CD8-positive, alpha-beta memory T cell (primary cell): ENCODE measurements at regions of chr5 and their contacts with region 1.

Region 1: DNA sequence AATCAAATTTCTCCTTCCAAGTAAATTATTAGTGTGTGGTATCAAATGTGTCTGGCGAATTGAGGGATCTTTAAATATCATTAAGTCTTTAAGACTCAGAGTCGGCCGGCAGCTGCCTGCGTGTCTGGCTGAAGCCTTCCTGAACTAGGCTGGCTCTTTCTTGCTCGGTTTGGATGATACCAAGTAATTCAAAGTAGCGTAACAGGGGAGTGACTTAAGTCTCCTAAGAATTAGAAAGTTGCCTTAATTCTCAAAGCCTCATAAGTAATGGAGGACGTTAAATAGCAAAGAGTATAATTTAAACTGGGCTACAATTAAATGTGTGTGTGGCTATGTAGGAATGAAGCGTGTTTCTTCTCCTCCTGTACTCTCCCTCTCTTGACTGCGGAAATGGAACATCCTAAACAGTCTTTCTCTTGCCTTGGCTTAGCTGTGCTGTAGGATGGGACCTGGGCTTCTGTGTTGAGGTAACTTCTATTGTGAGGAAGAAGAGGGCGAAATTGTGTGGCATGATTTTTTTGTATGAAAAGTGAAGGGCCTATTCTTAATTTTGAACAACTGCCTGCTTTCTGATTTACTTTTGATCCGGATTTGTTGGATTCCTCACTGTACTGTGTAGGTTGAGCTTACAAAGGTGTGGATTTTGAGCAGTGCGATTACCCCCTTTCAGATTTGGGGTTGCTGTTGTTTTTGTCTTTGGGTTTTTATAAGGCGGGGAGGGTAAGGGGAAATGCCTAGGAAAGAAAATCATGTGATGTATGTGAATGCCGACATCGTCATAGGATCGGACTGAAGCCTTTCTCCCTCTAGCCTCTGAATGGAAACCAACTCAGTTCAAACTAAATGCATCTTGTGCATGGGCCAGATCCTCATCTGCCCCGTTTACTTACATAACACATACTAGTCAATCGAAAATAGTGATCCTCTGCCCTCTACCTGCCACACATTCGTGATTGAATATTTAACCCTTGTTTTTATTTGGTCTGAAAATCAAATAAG is 29.9 kb downstream of the CPEB4 start:
- DNase-seq: peak; percentile 33 to 82 (median 73)
- H3K4me3 ChIP-seq: peak overlapping the region; percentile 66
- H3K4me3 Mint-ChIP-seq: no peak overlapping the region
- H3K27ac ChIP-seq: peak overlapping the region; percentile 71
- H3K27ac Mint-ChIP-seq: no peak overlapping the region
- H3K4me1 ChIP-seq: peaks cover 11% of the 10 kb centered on the region
- H3K4me1 Mint-ChIP-seq: peaks cover 0 to 6% (median 2%) of the 10 kb centered on the region in 3 donors
- H3K27me3 ChIP-seq: no peaks in the 10 kb centered on the region
- H3K27me3 Mint-ChIP-seq: no peaks in the 10 kb centered on the region

Region 2: GRCh38 chr5:173172166-173172565 is 745.9 kb before region 1 on chr5:
- CTCF ChIA-PET with region 1: no interaction called
- POLR2A ChIA-PET with region 1: no interaction called
- DNase-seq: no peak
- H3K4me3 ChIP-seq: no peak overlapping the region
- H3K4me3 Mint-ChIP-seq: no peak overlapping the region
- H3K27ac ChIP-seq: no peak overlapping the region
- H3K27ac Mint-ChIP-seq: no peak overlapping the region
- H3K4me1 ChIP-seq: no peaks in the 10 kb centered on the region
- H3K4me1 Mint-ChIP-seq: no peaks in the 10 kb centered on the region
- H3K27me3 ChIP-seq: no peaks in the 10 kb centered on the region
- H3K27me3 Mint-ChIP-seq: no peaks in the 10 kb centered on the region

Region 3: GRCh38 chr5:173887610-173888472 is 30.2 kb before region 1 on chr5 and contains the start of gene CPEB4:
- CTCF ChIA-PET with region 1: interaction called, 5 read pairs
- POLR2A ChIA-PET with region 1: interaction called, 25 read pairs
- DNase-seq: peak; percentile 94 to 99 (median 97)
- H3K4me3 ChIP-seq: peak within 1 kb of the TSS; percentile 81
- H3K4me3 Mint-ChIP-seq: peak within 1 kb of the TSS; percentile 95 to 100 (median 98)
- H3K27ac ChIP-seq: peak within 1 kb of the TSS; percentile 80
- H3K27ac Mint-ChIP-seq: peak within 1 kb of the TSS; percentile 81 to 100 (median 99)
- H3K4me1 ChIP-seq: peaks cover 67% of the 10 kb centered on the region
- H3K4me1 Mint-ChIP-seq: peaks cover 76 to 92% (median 91%) of the 10 kb centered on the region in 3 donors
- H3K27me3 ChIP-seq: no peaks in the 10 kb centered on the region
- H3K27me3 Mint-ChIP-seq: no peaks in the 10 kb centered on the region
- total RNA-seq, gene CPEB4: 17.2 to 18.7 TPM